ENCODE measurements at regions of chr6 and their contacts with region 1.

Region 1: GRCh38 chr6:15389765-15390723 is 144.2 kb downstream of the JARID2 start:
- DNase-seq: peak; percentile 46 to 76 (median 61)
- ATAC-seq: peak; percentile 83
- H3K4me3 ChIP-seq: no peak overlapping the region
- H3K27ac ChIP-seq: no peak overlapping the region; the same call in 2 of the 3 replicates
- H3K4me1 ChIP-seq: peaks cover 15 to 43% of the 10 kb centered on the region in 2 experiments; a peak in 4 of 5 replicates
- H3K27me3 ChIP-seq: no peaks in the 10 kb centered on the region
- CTCF ChIP-seq: peak; percentile 80 to 90 (median 81)
- EP300 ChIP-seq: no peak
- POLR2A ChIP-seq: no peak
- RAD21 ChIP-seq: peak; percentile 76 to 96

Region 2: GRCh38 chr6:14799928-14800327 is 590.1 kb before region 1 on chr6:
- CTCF ChIA-PET with region 1: no interaction called
- POLR2A ChIA-PET with region 1: no interaction called
- in situ Hi-C with region 1: no loop called
- intact Hi-C with region 1: loop called (anchors 10 kb)
- DNase-seq: peak; percentile 79 to 85 (median 82)
- ATAC-seq: peak; percentile 97
- H3K4me3 ChIP-seq: no peak overlapping the region
- H3K27ac ChIP-seq: no peak overlapping the region
- H3K4me1 ChIP-seq: peaks cover 6 to 27% of the 10 kb centered on the region in 2 experiments
- H3K27me3 ChIP-seq: no peaks in the 10 kb centered on the region
- CTCF ChIP-seq: no peak
- EP300 ChIP-seq: no peak
- POLR2A ChIP-seq: no peak
- RAD21 ChIP-seq: no peak

Region 3: GRCh38 chr6:14865531-14866100 is 524.4 kb before region 1 on chr6:
- CTCF ChIA-PET with region 1: no interaction called
- POLR2A ChIA-PET with region 1: no interaction called
- in situ Hi-C with region 1: no loop called
- intact Hi-C with region 1: loop called (anchors 10 kb)
- DNase-seq: peak in 3 of 4 experiments; percentile 25 to 32 (median 29)
- ATAC-seq: peak; percentile 64
- H3K4me3 ChIP-seq: no peak overlapping the region
- H3K27ac ChIP-seq: no peak overlapping the region
- H3K4me1 ChIP-seq: peaks cover 4 to 31% of the 10 kb centered on the region in 2 experiments; a peak in 4 of 5 replicates
- H3K27me3 ChIP-seq: no peaks in the 10 kb centered on the region
- CTCF ChIP-seq: no peak
- EP300 ChIP-seq: no peak
- POLR2A ChIP-seq: no peak
- RAD21 ChIP-seq: 0 out of 4 replicates have a peak, but pooled peaks of 1 of the 2 experiments have one; percentile 18

Region 4: GRCh38 chr6:15299430-15300131 is 90.5 kb before region 1 on chr6:
- CTCF ChIA-PET with region 1: no interaction called
- POLR2A ChIA-PET with region 1: no interaction called
- in situ Hi-C with region 1: no loop called
- intact Hi-C with region 1: loop called (anchors 5 kb)
- DNase-seq: peak; percentile 91 to 98 (median 94)
- ATAC-seq: peak; percentile 86
- H3K4me3 ChIP-seq: peak overlapping the region; percentile 0; the same call in 1 of the 2 replicates
- H3K27ac ChIP-seq: peak overlapping the region; percentile 89
- H3K4me1 ChIP-seq: peaks cover 37 to 77% of the 10 kb centered on the region in 2 experiments
- H3K27me3 ChIP-seq: no peaks in the 10 kb centered on the region
- CTCF ChIP-seq: peak in 1 of 3 experiments; percentile 18; a peak in 1 of 6 replicates
- EP300 ChIP-seq: peak; percentile 98
- POLR2A ChIP-seq: peak; percentile 69
- RAD21 ChIP-seq: peak in 1 of 2 experiments; percentile 35; a peak in 2 of 4 replicates

Region 5: DNA sequence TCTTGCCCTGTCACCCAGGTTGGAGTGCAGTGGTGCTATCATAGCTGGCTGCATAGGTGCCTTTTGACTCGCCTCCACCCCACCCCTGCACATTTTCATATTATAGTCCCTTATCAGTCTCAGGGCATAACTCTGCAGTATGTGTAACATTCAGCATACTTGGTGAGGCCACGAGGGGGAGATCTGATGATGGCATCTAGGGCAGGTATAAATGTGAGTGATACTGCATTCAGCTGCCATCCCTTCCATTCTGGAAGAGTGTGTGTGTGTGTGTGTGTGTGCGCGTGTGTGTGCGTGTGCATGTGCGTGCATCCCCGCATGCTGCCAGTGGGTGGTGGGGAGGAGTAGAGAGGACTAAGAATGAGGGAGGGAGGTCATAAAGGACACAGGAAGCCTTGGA is 62.8 kb before region 1 on chr6:
- CTCF ChIA-PET with region 1: no interaction called
- POLR2A ChIA-PET with region 1: no interaction called
- in situ Hi-C with region 1: loop called (anchors 5 kb)
- intact Hi-C with region 1: no loop called
- DNase-seq: peak; percentile 57 to 78 (median 70)
- ATAC-seq: peak; percentile 88
- H3K4me3 ChIP-seq: no peak overlapping the region
- H3K27ac ChIP-seq: no peak overlapping the region
- H3K4me1 ChIP-seq: peaks cover 12 to 33% of the 10 kb centered on the region in 2 experiments
- H3K27me3 ChIP-seq: no peaks in the 10 kb centered on the region
- CTCF ChIP-seq: peak; percentile 44 to 65 (median 56); a peak in 5 of 6 replicates
- EP300 ChIP-seq: peak; percentile 21; the same call in 1 of the 2 replicates
- POLR2A ChIP-seq: no peak
- RAD21 ChIP-seq: peak; percentile 58 to 74

Region 6: DNA sequence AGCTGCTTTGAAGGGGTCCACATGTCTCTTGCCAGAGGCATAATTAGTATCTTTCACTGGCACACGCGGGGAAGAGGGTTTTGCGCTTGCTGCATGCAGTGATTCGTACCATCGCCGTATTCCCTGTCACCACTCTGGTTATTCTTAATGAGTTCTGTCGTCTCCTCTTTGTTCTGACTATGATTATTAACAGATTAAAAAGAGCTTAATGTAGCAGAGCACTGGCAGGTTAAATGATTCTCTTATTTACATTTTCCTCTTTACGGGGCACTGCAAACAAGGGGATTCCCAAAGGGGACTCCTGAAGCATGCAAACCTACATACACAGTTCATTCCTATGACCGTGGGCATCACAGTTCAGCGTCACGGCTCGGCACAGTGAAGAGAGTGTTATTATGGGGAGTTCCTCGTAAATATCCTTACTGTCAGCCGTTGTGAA is 68.0 kb after region 1 on chr6:
- CTCF ChIA-PET with region 1: no interaction called
- POLR2A ChIA-PET with region 1: no interaction called
- in situ Hi-C with region 1: no loop called
- intact Hi-C with region 1: no loop called
- DNase-seq: no peak
- ATAC-seq: no peak
- H3K4me3 ChIP-seq: no peak overlapping the region
- H3K27ac ChIP-seq: no peak overlapping the region
- H3K4me1 ChIP-seq: no peaks in the 10 kb centered on the region
- H3K27me3 ChIP-seq: no peaks in the 10 kb centered on the region
- CTCF ChIP-seq: no peak
- EP300 ChIP-seq: no peak
- POLR2A ChIP-seq: no peak
- RAD21 ChIP-seq: no peak

Measured in K562 (cell line).